ENCODE measurements at regions of chr13 and their contacts with region 1.

Region 1: GRCh38 chr13:51803422-51804294 is at the start of gene DHRS12:
- DNase-seq: peak; percentile 67 to 96
- H3K4me3 ChIP-seq: peak within 1 kb of the TSS; percentile 79 to 98
- H3K27ac ChIP-seq: peak within 1 kb of the TSS; percentile 98
- H3K4me1 ChIP-seq: peaks cover 12 to 40% of the 10 kb centered on the region in 2 donors
- H3K27me3 ChIP-seq: no peaks in the 10 kb centered on the region
- CTCF ChIP-seq: no peak
- total RNA-seq, gene DHRS12: 7.9 TPM

Region 2: DNA sequence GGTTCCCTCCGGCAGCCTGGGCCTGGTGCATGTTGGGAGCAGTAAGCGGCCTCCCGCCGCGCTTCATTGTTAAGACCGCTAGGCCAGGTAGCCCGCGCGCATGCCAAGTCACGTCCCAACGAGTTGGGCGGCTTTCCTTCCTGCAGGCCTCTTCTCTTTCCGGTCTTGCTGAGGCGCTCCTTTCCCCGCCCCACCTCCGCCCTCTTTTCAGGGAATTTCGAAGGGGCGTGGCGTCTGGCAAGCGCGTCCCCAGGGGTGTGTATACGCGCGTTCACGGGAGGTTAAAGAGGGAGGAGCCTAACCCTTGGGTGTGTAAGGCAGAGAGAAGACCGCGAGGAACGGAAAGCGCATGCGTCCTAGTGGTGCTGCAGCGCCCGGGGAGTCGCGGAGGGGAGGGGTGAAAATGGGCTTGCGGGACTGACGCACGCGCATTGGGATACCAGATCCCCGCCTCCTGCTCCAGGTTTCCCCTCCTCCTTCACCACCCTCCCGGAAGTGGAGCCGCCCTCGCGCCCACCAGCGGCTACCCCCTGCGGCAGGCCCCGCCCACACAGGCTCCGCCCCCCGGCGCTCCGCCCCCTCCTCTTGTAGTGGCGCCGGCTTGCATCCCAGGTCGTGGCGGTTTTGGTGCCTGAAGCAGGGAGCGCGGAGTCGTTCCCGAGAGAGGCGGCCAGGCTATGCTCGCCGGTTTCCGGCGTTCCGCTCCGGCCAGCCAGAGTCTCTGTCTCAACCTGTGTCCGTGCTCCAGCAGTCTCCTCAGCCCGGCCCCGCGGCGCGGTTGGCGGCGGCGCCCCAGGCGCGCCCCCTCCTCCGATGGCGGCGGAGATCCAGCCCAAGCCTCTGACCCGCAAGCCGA is 219.6 kb before region 1 on chr13 and contains the start of gene WDFY2:
- intact Hi-C with region 1: loop called (anchors 1 kb)
- DNase-seq: peak; percentile 99 to 100
- H3K4me3 ChIP-seq: peak within 1 kb of the TSS; percentile 79 to 90
- H3K27ac ChIP-seq: peak within 1 kb of the TSS; percentile 84 to 89
- H3K4me1 ChIP-seq: peaks cover 0 to 8% of the 10 kb centered on the region in 2 donors
- H3K27me3 ChIP-seq: no peaks in the 10 kb centered on the region
- CTCF ChIP-seq: peak in 1 of 3 experiments; percentile 6
- total RNA-seq, gene WDFY2: 6.1 TPM

Region 3: DNA sequence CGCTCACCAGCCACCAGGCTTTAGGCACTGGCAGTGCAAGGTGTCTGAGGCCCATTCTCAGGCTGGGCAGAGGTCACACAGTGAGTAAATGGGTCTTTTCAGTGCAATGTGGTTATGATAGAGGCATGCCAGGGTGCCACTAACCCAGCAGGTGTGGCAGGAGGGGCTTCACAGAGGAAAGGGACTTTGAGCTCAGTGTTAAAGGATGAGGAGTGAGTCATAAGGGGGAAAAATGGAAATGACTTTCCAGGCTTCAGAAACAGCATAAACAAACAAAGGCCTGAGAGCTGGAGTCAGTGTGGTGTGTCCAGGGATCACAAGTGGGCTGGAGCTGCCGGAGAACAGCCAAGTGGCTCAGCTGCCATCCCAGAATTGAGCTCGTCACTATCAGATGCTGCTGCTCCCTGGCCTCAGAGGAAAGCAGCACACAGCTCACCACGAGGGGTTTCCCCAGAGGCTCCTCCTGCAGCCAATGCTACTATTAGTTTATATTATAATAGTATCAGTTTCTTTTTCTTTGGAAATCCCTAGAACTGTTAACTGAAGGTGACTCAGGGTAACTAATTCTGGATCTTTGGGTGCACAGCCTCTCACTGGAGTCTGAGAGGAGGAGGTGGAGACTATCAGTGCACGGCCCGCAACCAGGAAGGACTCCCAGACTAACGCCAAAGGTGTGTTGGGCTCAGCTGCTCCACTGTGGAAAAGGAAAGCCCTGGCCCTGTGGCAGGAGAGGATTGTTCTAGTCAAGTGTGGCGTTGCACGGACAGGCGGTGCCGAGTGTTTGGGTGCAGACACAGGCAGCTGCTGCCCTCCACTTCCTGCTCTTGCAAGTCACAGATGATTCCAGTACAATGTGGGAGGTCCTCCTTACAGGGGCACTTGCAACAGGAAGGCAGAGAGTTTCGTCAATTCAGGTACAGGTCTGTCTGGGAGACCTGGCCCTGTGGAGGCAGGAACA is 39.2 kb before region 1 on chr13:
- intact Hi-C with region 1: loop called (anchors 2 kb)
- DNase-seq: peak; percentile 59 to 80
- H3K4me3 ChIP-seq: peak overlapping the region; percentile 3 to 34
- H3K27ac ChIP-seq: peak overlapping the region; percentile 75 to 80
- H3K4me1 ChIP-seq: peaks cover 13 to 19% of the 10 kb centered on the region in 2 donors
- H3K27me3 ChIP-seq: no peaks in the 10 kb centered on the region
- CTCF ChIP-seq: no peak

Region 4: GRCh38 chr13:51861723-51862300 is 58.2 kb after region 1 on chr13 and contains the start of gene CCDC70:
- intact Hi-C with region 1: no loop called
- DNase-seq: no peak
- H3K4me3 ChIP-seq: no peak within 1 kb of the TSS
- H3K27ac ChIP-seq: no peak within 1 kb of the TSS
- H3K4me1 ChIP-seq: no peaks in the 10 kb centered on the region
- H3K27me3 ChIP-seq: no peaks in the 10 kb centered on the region
- CTCF ChIP-seq: no peak
- total RNA-seq, gene CCDC70: not detected

Region 5: DNA sequence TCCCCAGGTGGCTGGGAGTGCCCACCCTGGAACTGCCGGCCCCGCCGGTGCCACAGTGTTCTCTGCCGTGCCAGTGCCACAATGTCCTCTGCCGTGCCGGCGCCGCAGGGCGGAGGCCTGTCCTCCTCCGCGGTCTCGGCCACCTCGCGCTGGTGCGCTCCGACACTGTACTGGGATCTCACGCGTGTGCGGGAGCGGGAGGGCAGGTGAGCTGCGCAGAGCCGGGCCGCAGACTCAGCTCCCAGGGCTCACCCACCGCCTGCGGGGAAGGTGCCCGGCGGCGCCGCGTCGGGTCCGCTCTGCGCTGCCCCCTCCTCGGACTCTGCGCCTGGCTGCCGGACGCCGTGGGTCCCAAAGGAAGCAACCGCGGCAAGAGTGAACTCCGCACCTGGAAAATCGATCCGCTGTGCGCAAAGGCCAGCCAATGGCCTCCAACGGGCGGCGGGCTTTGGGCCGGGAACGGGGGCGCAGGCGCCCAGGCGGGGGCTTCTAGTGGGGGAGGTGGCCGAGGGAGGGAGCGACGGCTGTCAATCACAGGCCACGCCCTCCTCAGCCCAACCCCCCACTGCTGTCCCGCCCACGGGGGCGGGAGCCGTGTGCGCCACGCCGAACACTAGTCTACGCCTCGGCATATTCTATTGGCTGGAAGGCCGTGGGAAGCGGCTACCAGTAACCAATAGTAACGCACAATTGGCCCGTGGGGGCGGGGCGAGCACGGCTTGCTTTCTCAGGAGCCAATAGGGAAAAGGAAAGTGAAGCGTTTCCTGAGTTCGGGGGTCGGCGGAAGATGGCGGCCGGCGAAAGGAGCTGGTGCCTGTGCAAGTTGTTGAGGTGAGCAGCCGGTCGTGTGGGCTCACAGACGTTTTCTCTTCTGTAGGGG is 208.2 kb after region 1 on chr13 and contains the start of gene ALG11:
- intact Hi-C with region 1: loop called (anchors 5 kb)
- DNase-seq: peak; percentile 97 to 100
- H3K4me3 ChIP-seq: peak within 1 kb of the TSS; percentile 73 to 75
- H3K27ac ChIP-seq: peak within 1 kb of the TSS; percentile 65 to 70
- H3K4me1 ChIP-seq: peaks cover 0 to 9% of the 10 kb centered on the region in 2 donors
- H3K27me3 ChIP-seq: no peaks in the 10 kb centered on the region
- CTCF ChIP-seq: no peak
- total RNA-seq, gene ALG11: 13.6 TPM